Activated T-helper 1 cell treated with anti-CD3 and anti-CD28 coated beads, Interleukin-12 subunit alpha, Interleukin-12 subunit beta, Interleukin-2, Interleukin-4 antibody, amounts not matched to agents 30 ng/mL and 10 ng/mL and 1 ng/mL, durations not matched to agents 14 hours and 24 hours and 36 hours (primary cell): ENCODE measurements at regions of chr6 and their contacts with region 1.

Region 1: GRCh38 chr6:28212510-28213212 is 12.4 kb upstream of the ZSCAN9 start:
- DNase-seq: no peak
- H3K4me3 Mint-ChIP-seq: peak overlapping the region; percentile 82
- H3K27ac Mint-ChIP-seq: peak overlapping the region; percentile 67
- H3K4me1 Mint-ChIP-seq: peaks cover 36% of the 10 kb centered on the region
- H3K27me3 Mint-ChIP-seq: peaks cover 86% of the 10 kb centered on the region

Region 2: DNA sequence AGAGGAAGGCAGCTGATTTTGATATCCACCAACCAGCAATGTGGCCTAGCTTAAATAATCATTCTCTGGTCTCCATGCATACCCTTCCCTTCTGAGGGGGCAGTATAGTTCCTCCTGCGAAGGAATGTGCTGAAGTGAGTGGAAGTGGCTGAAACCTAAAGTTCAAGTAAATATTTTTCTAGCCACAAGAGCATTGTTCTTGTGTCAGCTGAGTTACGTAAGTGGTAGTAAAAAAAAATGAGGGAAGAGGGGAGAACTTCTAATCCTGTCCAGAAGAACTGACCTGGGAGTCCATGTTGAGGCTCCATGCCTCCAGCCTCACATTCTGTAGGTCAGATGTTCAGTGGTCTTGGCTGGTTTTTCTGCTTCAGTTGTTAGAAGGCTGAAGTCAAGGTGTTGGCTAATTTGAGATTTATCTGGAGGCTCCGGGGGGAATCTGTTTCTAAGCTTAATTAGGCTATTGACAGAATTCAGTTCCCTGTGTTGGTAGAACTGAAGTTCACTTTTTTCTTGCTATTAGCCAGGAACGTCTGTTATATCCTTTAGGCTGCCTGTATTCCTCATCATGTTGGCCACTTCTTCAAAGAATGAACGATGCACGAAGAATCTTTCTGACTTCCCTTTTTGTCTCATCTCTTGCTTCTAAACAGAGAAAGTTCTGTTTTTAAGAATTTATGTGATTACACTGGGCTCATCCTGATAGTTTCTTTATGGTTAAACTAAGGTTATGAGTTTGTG is 1172.2 kb before region 1 on chr6:
- intact Hi-C with region 1: no loop called
- DNase-seq: no peak
- H3K4me3 Mint-ChIP-seq: no peak overlapping the region
- H3K27ac Mint-ChIP-seq: no peak overlapping the region
- H3K4me1 Mint-ChIP-seq: no peaks in the 10 kb centered on the region
- H3K27me3 Mint-ChIP-seq: peaks cover 9% of the 10 kb centered on the region

Region 3: DNA sequence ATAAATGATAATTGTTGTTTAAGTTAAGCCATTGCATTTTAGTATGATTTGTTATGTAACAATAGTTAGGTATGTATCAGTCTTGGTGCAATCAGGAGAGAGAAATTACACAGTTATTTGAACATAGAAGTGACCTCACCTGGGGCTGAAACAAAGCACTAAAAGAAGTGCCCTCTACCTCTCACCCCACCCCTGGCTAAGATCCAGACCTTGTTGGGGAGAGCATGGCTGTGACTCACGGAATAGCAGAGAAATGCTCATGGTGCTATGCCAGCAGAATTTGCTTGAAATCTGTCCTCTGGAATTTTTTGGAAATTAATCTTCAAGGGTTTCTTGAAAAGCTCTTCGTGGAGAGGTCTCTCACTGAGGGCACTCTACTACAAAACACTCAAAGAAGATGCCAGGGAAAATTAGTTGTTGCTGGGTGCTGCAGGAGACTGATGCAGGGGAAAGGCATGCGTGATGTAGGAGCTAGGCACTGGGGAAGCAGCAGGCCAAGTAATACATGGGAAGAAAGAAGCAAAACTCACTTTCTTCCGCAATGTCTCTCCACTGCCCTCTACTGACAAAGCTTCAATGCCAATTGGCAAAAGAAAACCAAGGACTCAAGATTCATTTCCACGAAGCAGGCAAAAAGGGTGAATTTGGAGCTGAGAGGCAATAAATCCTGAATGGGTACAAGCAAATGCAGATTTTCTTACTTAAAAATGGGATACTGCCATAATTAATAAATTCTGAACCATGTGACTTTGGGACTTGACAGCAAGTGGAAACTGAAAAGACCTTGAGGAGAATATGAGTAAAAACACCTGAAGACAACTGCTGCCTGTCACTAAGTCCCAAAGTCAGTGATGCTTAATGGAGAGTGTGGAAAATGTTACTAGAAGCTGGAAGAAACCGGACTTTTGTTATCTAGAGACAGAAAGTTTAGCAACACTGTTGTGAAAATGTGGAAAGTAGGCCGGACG is 603.5 kb before region 1 on chr6:
- intact Hi-C with region 1: no loop called
- DNase-seq: no peak
- H3K4me3 Mint-ChIP-seq: no peak overlapping the region
- H3K27ac Mint-ChIP-seq: no peak overlapping the region
- H3K4me1 Mint-ChIP-seq: peaks cover 18% of the 10 kb centered on the region
- H3K27me3 Mint-ChIP-seq: peaks cover 28% of the 10 kb centered on the region

Region 4: GRCh38 chr6:28080631-28081485 is 131.8 kb before region 1 on chr6:
- intact Hi-C with region 1: loop called (anchors 2 kb)
- DNase-seq: peak; percentile 82
- H3K4me3 Mint-ChIP-seq: peak overlapping the region; percentile 96
- H3K27ac Mint-ChIP-seq: peak overlapping the region; percentile 96
- H3K4me1 Mint-ChIP-seq: peaks cover 21% of the 10 kb centered on the region
- H3K27me3 Mint-ChIP-seq: peaks cover 2% of the 10 kb centered on the region

Region 5: DNA sequence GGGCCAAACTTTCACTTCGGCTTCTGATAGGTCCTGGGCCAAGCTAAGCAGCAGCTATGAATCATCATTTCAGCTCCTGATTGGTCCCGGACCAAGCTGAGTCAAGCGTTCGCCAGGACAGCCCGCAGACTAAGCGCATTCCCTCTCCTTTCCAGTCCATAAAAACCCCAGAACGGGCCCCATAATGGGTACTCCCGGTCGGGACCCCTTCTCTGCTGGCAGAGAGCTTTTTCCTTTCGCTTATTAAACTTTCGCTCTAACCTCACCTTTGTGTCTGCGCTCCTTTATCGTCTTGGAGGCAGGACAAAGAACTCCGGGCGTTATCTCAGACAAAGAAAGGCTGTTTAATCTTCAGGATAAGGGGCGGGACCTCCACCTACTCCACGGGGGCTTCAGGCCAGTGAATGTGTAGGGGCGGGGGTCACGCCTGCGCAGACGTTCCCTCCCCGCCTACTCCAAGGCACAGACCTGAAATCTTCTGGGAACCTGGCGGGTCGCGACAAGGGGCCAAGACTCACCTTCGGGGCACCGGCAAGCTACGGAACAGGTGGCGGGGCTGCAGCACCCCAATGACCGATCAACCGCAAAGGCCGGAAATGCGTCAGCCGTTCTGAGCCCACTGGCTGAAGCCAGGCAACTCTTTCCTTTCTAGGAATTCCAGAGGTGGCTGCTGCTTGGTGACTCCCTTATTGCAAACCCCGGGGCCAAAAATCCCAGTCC is 123.1 kb after region 1 on chr6 and contains the start of gene ZSCAN31:
- intact Hi-C with region 1: loop called (anchors 5 kb)
- DNase-seq: peak; percentile 56
- H3K4me3 Mint-ChIP-seq: no peak within 1 kb of the TSS
- H3K27ac Mint-ChIP-seq: no peak within 1 kb of the TSS
- H3K4me1 Mint-ChIP-seq: no peaks in the 10 kb centered on the region
- H3K27me3 Mint-ChIP-seq: peaks cover 7% of the 10 kb centered on the region
- total RNA-seq, gene ZSCAN31: 1.0 and 1.2 TPM in 2 replicates

Region 6: GRCh38 chr6:28349892-28350737 is 137.5 kb after region 1 on chr6 and contains the start of gene ZKSCAN3:
- intact Hi-C with region 1: loop called (anchors 5 kb)
- DNase-seq: peak; percentile 84
- H3K4me3 Mint-ChIP-seq: peak within 1 kb of the TSS; percentile 98
- H3K27ac Mint-ChIP-seq: peak within 1 kb of the TSS; percentile 91
- H3K4me1 Mint-ChIP-seq: peaks cover 28% of the 10 kb centered on the region
- H3K27me3 Mint-ChIP-seq: peaks cover 16% of the 10 kb centered on the region
- total RNA-seq, gene ZKSCAN3: 2.9 and 3.3 TPM in 2 replicates

Region 7: GRCh38 chr6:28443112-28443773 is 230.6 kb after region 1 on chr6 and contains the start of gene ZSCAN23:
- intact Hi-C with region 1: loop called (anchors 5 kb)
- DNase-seq: peak; percentile 79
- H3K4me3 Mint-ChIP-seq: peak within 1 kb of the TSS; percentile 98
- H3K27ac Mint-ChIP-seq: peak within 1 kb of the TSS; percentile 89
- H3K4me1 Mint-ChIP-seq: peaks cover 41% of the 10 kb centered on the region
- H3K27me3 Mint-ChIP-seq: peaks cover 16% of the 10 kb centered on the region
- total RNA-seq, gene ZSCAN23: 1.1 and 2.2 TPM in 2 replicates

Region 8: DNA sequence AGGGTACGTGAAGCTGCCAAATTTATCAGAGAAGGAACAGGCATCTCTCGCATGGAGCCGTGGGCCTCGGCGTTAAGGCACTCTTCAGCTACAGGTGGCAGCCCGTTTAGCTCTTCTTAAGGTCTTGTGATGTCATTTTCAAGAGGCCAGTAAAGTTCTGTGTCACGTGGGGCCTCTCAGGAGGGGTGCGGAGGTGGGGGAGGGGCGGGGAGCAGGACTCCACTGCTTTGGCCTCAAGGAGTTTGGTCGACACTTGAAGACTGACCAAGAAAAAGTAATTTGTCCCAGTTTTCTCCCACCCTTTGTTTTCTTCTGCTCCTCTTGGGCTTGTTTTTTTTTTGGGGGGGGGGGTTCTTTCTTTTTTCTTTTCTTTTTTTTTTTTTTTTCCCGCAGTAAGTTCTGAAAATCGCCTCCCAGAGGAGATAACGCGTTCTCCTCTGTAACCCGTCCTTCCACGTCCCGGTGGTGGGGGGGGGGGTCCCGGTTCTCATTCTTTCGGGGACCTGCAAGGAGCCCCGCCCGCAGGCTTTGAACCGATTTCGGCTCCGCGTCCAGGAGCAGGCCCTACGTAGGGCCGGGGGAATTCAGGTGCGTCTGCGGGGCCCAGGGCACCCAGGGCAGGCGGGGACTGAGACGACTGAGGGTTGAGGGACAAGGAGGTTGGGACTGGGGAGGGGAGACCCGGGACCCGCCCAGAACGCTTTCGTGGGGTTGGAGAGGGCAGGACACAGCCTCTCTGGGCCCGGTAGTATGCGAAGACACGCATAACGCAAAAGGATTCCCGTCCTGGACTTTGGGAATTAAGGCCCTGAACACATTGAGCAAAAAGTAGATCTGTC is 276.9 kb after region 1 on chr6:
- intact Hi-C with region 1: loop called (anchors 5 kb)
- DNase-seq: peak; percentile 24
- H3K4me3 Mint-ChIP-seq: peak overlapping the region; percentile 78
- H3K27ac Mint-ChIP-seq: peak overlapping the region; percentile 77
- H3K4me1 Mint-ChIP-seq: peaks cover 27% of the 10 kb centered on the region
- H3K27me3 Mint-ChIP-seq: peaks cover 48% of the 10 kb centered on the region

Region 9: DNA sequence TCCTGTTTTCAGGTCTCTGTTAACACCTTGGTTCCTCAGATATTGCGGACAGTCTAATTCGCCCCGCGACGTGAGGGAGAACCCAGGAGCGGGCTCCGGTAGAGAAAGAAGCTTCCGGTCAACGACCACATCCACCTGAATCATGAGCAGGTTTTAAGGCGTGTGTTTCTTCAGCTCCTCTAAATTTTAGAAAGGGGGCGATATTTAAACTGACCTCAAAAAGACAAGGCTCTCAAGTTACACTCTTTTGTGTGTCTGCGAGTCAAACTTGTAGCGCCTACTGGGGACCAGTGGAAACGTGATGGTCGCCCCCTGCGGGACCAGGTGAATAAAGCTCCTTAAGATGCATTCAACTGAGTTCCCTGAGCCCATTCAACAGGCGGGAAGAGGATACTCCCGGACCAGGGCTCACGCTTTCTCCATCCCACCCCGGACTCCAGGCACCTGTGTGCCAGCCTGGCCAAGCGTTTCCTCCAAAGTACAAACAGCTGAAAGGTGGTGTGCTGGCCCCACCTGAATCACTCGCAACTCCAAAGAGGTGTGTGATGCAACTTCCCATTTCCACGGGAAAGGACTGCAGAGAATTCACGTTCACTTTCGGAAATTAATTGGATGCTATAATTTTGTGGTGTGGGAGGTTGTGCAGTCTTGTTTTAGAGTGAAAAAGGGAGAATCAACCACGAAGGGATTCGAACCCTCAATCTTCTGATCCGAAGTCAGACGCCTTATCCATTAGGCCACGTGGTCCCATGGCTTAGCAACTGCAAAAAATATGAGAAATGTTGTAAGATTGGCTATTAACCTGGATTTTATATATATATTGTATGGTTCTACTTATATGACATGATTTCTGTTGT is 330.0 kb after region 1 on chr6:
- intact Hi-C with region 1: loop called (anchors 5 kb)
- DNase-seq: peak; percentile 18
- H3K4me3 Mint-ChIP-seq: peak overlapping the region; percentile 77
- H3K27ac Mint-ChIP-seq: peak overlapping the region; percentile 44
- H3K4me1 Mint-ChIP-seq: peaks cover 28% of the 10 kb centered on the region
- H3K27me3 Mint-ChIP-seq: peaks cover 44% of the 10 kb centered on the region